ENCODE measurements at regions of chr3 and their contacts with region 1.

Region 1: DNA sequence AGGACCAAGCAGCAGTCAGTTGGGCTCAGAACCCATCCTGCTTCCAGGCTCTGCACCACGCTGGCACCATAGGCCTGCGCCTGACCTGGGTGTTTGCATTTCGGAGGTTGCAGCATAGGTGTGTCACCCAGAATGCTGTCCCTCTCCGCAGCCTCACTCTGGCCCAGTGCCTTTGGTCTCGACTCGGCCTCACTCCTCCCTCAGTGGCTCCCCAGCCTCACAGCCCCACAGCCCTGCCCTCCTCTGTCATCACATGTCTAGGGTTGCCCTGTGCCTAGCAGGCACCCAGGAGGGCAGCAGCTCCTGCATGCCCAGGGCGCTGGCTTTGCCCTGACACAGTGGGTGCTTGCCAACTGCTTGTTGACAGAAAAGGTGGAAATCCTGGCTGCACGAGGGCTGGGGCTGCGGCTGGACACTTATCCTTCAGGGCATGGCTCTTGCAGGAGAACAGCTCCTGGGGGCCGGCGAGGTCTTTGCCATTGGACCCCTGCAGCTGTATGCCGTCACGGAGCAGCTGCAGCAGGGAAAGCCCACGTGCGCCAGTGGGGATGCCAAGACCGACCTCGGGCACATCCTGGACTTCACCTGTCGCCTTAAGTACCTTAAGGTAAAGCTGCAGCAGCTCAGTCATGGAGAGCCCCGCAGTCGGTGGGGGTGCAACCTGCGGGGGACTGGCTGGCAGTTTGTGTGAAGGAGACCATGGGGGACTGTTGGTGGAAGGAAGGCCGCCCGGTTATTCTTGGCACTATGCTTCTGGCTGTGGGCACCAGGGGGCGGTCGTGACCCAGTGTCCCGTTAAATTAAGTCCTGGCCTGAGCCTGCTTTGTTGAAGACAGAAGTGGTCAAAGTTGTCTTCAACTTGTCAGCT is 16.2 kb downstream of the NISCH start:
- DNase-seq: peak; percentile 89
- ATAC-seq: peak; percentile 84

Region 2: GRCh38 chr3:52525680-52526561 is 54.3 kb after region 1 on chr3:
- intact Hi-C with region 1: no loop called
- DNase-seq: peak; percentile 35
- ATAC-seq: no peak

Region 3: GRCh38 chr3:52536369-52537164 is 65.0 kb after region 1 on chr3 and contains the start of gene UQCC5:
- intact Hi-C with region 1: loop called (anchors 5 kb)
- DNase-seq: peak; percentile 99
- ATAC-seq: peak; percentile 90
- total RNA-seq, gene UQCC5: 58.7 TPM